Heart left ventricle (tissue), 16 donors: ENCODE measurements at regions of chr16 and their contacts with region 1.

Region 1: DNA sequence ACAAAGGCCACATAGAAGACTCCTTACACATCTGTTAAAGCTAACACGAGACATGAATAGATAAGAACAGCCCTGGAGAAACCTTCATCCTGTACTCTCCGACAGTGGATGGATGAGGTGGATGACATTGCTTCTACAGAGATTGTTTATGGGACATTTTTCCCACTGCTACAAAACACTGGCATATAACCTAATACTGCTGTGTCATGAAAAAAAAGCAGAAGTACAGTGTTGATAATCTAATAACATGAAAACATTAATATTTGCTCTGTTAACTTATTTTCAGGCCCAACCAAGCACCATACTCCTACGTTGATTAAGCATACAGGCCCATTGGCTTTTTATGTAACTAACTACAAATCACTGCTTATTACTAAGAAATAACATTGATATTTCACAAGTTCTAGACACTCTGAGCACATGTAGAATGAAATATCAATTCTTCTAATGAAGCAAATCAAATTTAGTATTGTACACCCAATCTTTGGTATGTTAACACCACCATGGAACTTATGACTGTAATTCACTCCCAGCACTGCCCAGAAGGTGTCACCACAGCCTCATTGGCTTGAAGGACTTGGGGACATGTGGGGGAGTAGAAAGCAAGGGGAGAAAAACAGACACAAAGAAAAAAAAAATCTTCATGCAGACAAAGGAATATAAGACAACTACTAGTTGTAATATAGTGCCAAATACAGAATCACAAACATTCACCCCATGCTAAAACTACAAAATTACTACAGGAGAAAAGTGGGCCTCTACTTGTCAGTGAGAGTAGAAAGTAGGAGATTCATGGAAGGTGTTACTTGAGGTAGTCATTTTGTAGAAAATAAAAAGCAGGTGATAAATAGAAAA is 330.0 kb upstream of the PMFBP1 start:
- DNase-seq: peak in 3 of 5 donors; percentile 29 to 30 (median 29)
- ATAC-seq: peak in 3 of 4 donors; percentile 67 to 80 (median 74)
- H3K4me3 ChIP-seq: no peak overlapping the region
- H3K27ac ChIP-seq: no peak overlapping the region
- H3K4me1 ChIP-seq: no peaks in the 10 kb centered on the region
- H3K27me3 ChIP-seq: no peaks in the 10 kb centered on the region
- CTCF ChIP-seq: peak; percentile 58 to 84 (median 72)
- POLR2A ChIP-seq: no peak

Region 2: DNA sequence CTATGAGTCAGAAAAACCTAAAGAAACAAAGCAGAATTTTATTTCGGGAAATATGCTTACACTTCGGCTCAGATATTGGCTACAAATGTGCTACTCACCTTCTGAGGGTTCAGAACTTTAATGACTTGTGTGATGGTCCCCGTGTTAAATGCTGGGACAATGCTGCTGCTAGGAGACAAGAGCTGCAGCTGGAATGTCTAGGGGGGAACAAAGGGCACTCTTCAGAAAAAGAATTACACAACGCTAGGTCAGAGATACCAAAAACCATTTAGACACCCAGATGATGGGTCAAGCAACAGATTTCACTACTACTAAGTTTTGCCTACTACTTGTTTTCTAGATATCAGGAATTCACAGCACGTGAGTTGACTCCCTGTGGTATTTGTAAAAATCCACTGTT is 767.5 kb before region 1 on chr16:
- intact Hi-C with region 1: no loop called
- DNase-seq: no peak
- ATAC-seq: no peak
- H3K4me3 ChIP-seq: no peak overlapping the region
- H3K27ac ChIP-seq: no peak overlapping the region
- H3K4me1 ChIP-seq: peaks cover 0 to 6% (median 0%) of the 10 kb centered on the region in 12 donors
- H3K27me3 ChIP-seq: no peaks in the 10 kb centered on the region
- CTCF ChIP-seq: no peak
- POLR2A ChIP-seq: no peak

Region 3: DNA sequence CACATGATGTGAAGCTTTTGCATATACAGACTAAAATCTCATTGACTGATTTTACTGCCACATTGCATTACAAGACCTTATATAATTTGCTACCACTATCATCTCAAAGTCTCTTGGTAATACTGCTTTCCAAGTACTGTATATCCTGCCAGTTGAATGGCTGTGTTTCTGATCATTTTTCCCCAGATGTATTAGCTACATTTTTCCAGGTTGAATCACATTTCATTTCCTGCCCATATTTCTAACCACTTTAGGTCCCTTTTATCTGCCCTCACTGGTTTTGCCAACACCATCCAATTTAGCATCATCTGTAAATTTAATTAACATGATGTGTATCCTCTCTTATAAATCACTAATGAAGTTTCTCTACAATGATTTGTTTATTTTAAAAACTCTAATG is 35.7 kb after region 1 on chr16:
- intact Hi-C with region 1: no loop called
- DNase-seq: no peak
- ATAC-seq: no peak
- H3K4me3 ChIP-seq: no peak overlapping the region
- H3K27ac ChIP-seq: no peak overlapping the region
- H3K4me1 ChIP-seq: no peaks in the 10 kb centered on the region
- H3K27me3 ChIP-seq: no peaks in the 10 kb centered on the region
- CTCF ChIP-seq: no peak
- POLR2A ChIP-seq: no peak

Region 4: GRCh38 chr16:72568502-72568901 is 66.5 kb after region 1 on chr16:
- intact Hi-C with region 1: no loop called
- DNase-seq: no peak
- ATAC-seq: no peak
- H3K4me3 ChIP-seq: no peak overlapping the region
- H3K27ac ChIP-seq: no peak overlapping the region
- H3K4me1 ChIP-seq: no peaks in the 10 kb centered on the region
- H3K27me3 ChIP-seq: no peaks in the 10 kb centered on the region
- CTCF ChIP-seq: no peak
- POLR2A ChIP-seq: no peak

Region 5: DNA sequence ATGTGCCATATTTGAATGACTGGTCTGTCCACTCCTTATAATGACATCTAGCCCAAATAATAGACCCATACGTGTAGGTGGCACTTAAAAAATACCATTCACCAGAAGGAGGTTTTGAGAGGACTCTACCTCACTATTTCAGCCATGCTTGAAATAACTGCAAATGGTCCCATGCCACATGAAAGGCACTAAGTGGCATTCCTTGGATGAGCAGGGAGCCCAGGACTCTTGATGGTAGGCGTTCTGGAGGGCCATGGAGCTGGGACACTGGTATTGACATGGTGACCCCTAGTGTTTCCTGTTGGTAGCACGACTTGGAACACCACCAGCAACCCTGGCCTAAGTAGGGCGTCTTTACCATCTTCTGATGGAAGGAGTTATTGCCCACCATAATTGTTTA is 694.7 kb after region 1 on chr16:
- intact Hi-C with region 1: loop called in 9 of 10 experiments (anchors 2 to 10 kb)
- DNase-seq: peak in 4 of 5 donors; percentile 61 to 73 (median 68)
- ATAC-seq: peak; percentile 69 to 93 (median 90)
- H3K4me3 ChIP-seq: no peak overlapping the region
- H3K27ac ChIP-seq: no peak overlapping the region
- H3K4me1 ChIP-seq: no peaks in the 10 kb centered on the region
- H3K27me3 ChIP-seq: peaks cover 0 to 5% (median 0%) of the 10 kb centered on the region in 9 donors
- CTCF ChIP-seq: peak; percentile 51 to 78 (median 69)
- POLR2A ChIP-seq: no peak

Region 6: DNA sequence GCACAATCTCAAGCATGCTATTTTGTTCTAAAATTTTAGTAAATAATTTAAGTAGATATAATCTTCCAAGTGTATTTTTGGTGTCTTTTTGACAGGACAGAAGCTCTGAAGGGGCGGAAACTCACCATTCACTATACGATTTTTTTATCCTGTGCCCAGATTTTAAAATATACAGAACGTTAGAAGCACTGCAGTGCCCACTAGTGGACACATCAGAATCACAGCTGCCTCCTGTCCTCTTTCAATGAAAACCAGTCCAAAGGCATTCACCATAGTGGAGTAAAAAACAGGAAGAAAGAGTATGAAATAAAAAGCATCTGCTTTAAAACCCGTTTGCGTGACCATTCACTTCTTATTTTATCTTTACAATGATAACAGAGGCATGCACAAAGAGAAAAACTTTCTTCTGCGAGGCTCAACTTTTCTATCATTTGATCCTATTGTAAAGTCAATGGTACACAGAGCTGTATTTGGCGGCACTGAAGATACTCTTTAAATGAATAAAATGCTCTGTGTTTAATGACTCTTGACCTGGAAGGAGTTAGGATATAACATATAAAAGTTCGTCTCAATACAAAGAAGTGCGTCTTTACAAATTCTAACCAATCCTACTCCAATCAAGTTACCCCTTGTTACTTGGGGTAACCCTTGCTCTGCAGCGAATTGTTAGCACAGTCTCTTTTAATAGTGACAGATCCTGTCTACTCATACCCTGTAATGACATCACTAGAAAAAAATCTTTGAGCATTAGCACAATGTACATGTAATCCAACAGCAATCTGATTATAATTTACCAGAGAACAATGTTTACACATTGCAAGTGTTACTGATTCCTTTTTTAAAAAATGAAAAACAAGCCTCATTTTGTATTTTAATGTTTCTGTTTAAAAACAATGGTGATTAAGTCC is 1454.9 kb after region 1 on chr16:
- intact Hi-C with region 1: loop called in 4 of 10 experiments (anchors 10 kb)
- DNase-seq: peak in 4 of 5 donors; percentile 34 to 48 (median 46)
- ATAC-seq: peak in 1 of 4 donors; percentile 66
- H3K4me3 ChIP-seq: no peak overlapping the region
- H3K27ac ChIP-seq: no peak overlapping the region
- H3K4me1 ChIP-seq: peaks cover 0 to 5% (median 0%) of the 10 kb centered on the region in 12 donors
- H3K27me3 ChIP-seq: peaks cover 0 to 5% (median 0%) of the 10 kb centered on the region in 9 donors
- CTCF ChIP-seq: peak; percentile 73 to 89 (median 81)
- POLR2A ChIP-seq: no peak